ENCODE measurements at regions of chr3 and their contacts with region 1.

Region 1: GRCh38 chr3:140972833-140973232 is 31.2 kb downstream of the SLC25A36 start:
- DNase-seq: no peak
- ATAC-seq: no peak
- H3K4me3 Mint-ChIP-seq: no peak overlapping the region
- H3K27ac Mint-ChIP-seq: no peak overlapping the region
- H3K4me1 Mint-ChIP-seq: no peaks in the 10 kb centered on the region
- H3K27me3 Mint-ChIP-seq: no peaks in the 10 kb centered on the region
- CTCF ChIP-seq: no peak

Region 2: GRCh38 chr3:140898340-140899180 is 74.3 kb before region 1 on chr3:
- CTCF ChIA-PET with region 1: interaction called, 3 read pairs
- POLR2A ChIA-PET with region 1: no interaction called
- intact Hi-C with region 1: loop called (anchors 1 kb)
- DNase-seq: no peak
- ATAC-seq: peak; percentile 54
- H3K4me3 Mint-ChIP-seq: no peak overlapping the region
- H3K27ac Mint-ChIP-seq: no peak overlapping the region
- H3K4me1 Mint-ChIP-seq: no peaks in the 10 kb centered on the region
- H3K27me3 Mint-ChIP-seq: peaks cover 21% of the 10 kb centered on the region
- CTCF ChIP-seq: peak; percentile 53

Region 3: DNA sequence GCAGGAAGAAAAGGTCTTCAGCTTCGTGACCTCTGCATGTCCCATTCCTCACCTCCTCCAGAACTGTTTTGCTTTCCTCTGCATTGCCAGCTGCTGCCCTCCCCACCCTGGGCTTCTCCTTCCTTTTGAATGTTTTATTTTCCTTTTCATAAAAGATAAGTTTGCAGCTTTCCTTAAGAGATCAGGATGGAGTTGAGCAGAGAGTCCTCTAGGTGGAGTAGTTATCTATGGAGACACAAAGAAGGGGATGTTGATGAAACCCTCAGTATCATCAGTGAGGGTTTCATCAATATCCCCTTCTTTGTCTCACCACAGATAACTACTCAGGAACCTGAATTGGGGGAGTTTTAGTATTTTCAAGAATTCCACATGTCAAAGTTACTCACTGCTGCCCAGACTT is 50.2 kb before region 1 on chr3:
- CTCF ChIA-PET with region 1: interaction called, 4 read pairs
- POLR2A ChIA-PET with region 1: no interaction called
- intact Hi-C with region 1: loop called (anchors 1 kb)
- DNase-seq: no peak
- ATAC-seq: peak; percentile 34
- H3K4me3 Mint-ChIP-seq: no peak overlapping the region
- H3K27ac Mint-ChIP-seq: no peak overlapping the region
- H3K4me1 Mint-ChIP-seq: no peaks in the 10 kb centered on the region
- H3K27me3 Mint-ChIP-seq: peaks cover 20% of the 10 kb centered on the region
- CTCF ChIP-seq: no peak

Measured in activated B cell treated with CpG ODN at 0.5 μM for 24 hours (primary cell).